Ovary (tissue), 10 donors: ENCODE measurements at regions of chrX and their contacts with region 1.

Region 1: GRCh38 chrX:148854209-148854691 is 353.8 kb downstream of the AFF2 start:
- DNase-seq: no peak
- H3K4me3 ChIP-seq: no peak overlapping the region
- H3K27ac ChIP-seq: no peak overlapping the region
- H3K4me1 ChIP-seq: no peaks in the 10 kb centered on the region
- H3K27me3 ChIP-seq: no peaks in the 10 kb centered on the region
- CTCF ChIP-seq: no peak
- EP300 ChIP-seq: no peak
- POLR2A ChIP-seq: no peak

Region 2: GRCh38 chrX:149010009-149010852 is 156.0 kb after region 1 on chrX:
- intact Hi-C with region 1: no loop called
- DNase-seq: no peak
- H3K4me3 ChIP-seq: no peak overlapping the region
- H3K27ac ChIP-seq: no peak overlapping the region
- H3K4me1 ChIP-seq: no peaks in the 10 kb centered on the region
- H3K27me3 ChIP-seq: no peaks in the 10 kb centered on the region
- CTCF ChIP-seq: no peak
- EP300 ChIP-seq: no peak
- POLR2A ChIP-seq: no peak

Region 3: GRCh38 chrX:149512225-149512885 is 658.1 kb after region 1 on chrX:
- intact Hi-C with region 1: loop called in 1 of 4 experiments (anchors 5 kb)
- DNase-seq: no peak
- H3K4me3 ChIP-seq: no peak overlapping the region
- H3K27ac ChIP-seq: no peak overlapping the region
- H3K4me1 ChIP-seq: no peaks in the 10 kb centered on the region
- H3K27me3 ChIP-seq: no peaks in the 10 kb centered on the region
- CTCF ChIP-seq: no peak
- EP300 ChIP-seq: no peak
- POLR2A ChIP-seq: no peak